Activated CD4-positive, alpha-beta T cell treated with anti-CD3 and anti-CD28 coated beads for 36 hours (primary cell): ENCODE measurements at regions of chr19 and their contacts with region 1.

Region 1: GRCh38 chr19:42075616-42076379 is at the start of gene ZNF574:
- DNase-seq: peak; percentile 99
- ATAC-seq: peak; percentile 99
- H3K4me3 Mint-ChIP-seq: peak within 1 kb of the TSS; percentile 89
- H3K27ac Mint-ChIP-seq: peak within 1 kb of the TSS; percentile 99
- H3K4me1 Mint-ChIP-seq: peaks cover 27% of the 10 kb centered on the region
- H3K27me3 Mint-ChIP-seq: no peaks in the 10 kb centered on the region
- total RNA-seq, gene ZNF574: 10.7 to 14.8 TPM

Region 2: DNA sequence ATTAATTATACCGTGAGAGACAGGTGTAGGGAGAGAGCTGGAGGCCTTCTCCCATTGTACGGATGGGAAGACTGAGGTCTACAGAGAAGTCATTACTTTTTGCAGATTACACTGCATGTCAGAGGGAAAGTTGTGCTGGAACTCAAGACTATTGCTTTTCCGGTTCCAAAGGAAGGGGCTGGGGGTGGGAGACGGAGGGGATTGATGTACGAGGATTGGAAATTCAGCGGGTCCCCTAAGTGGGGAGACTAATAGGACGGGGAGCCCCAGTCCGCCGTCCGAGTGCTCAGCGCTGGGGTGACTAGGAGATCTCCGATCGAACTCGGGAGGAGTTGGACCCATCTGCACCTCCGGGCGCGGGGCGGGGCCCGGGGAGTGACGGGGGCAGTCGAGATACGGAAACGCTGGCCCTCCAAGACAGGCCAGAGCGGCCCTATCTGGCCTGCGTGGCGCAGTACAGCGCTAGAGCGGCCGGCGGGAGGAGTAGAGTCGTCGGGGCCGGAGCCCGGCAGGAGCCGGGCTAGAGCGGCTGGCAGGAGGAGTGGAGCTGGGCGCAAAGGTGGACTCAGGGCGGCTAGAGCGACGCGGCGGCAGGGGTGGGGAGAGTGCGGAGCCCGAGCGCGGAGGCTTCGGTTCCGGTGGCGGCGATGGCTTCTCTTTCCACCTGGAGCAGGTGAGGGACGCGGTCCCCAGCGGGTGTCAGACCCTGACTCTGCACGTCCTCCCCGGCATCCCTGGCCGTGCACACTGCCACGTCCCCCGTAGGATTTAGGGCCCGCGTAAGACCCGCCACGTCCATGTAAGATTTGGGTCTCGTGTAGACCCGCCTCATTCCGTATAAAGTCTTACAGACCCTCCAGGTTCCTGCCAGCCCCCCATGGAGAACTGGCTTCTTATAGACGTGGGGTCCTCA is 191.7 kb before region 1 on chr19:
- CTCF ChIA-PET with region 1: no interaction called
- POLR2A ChIA-PET with region 1: no interaction called
- intact Hi-C with region 1: loop called in 1 of 2 experiments (anchors 5 kb)
- DNase-seq: peak; percentile 94
- ATAC-seq: peak; percentile 75
- H3K4me3 Mint-ChIP-seq: peak overlapping the region; percentile 68
- H3K27ac Mint-ChIP-seq: peak overlapping the region; percentile 96
- H3K4me1 Mint-ChIP-seq: peaks cover 54% of the 10 kb centered on the region
- H3K27me3 Mint-ChIP-seq: no peaks in the 10 kb centered on the region

Region 3: GRCh38 chr19:42048992-42049391 is 26.8 kb before region 1 on chr19:
- CTCF ChIA-PET with region 1: no interaction called
- POLR2A ChIA-PET with region 1: no interaction called
- intact Hi-C with region 1: loop called in 1 of 2 experiments (anchors 1 kb)
- DNase-seq: peak; percentile 34
- ATAC-seq: peak; percentile 9
- H3K4me3 Mint-ChIP-seq: no peak overlapping the region
- H3K27ac Mint-ChIP-seq: peak overlapping the region; percentile 35
- H3K4me1 Mint-ChIP-seq: peaks cover 21% of the 10 kb centered on the region
- H3K27me3 Mint-ChIP-seq: peaks cover 2% of the 10 kb centered on the region

Region 4: GRCh38 chr19:42244347-42245220 is 168.8 kb after region 1 on chr19:
- CTCF ChIA-PET with region 1: interaction called, 4 read pairs
- POLR2A ChIA-PET with region 1: no interaction called
- intact Hi-C with region 1: loop called in 1 of 2 experiments (anchors 1 kb)
- DNase-seq: peak; percentile 96
- ATAC-seq: peak; percentile 49
- H3K4me3 Mint-ChIP-seq: peak overlapping the region; percentile 93
- H3K27ac Mint-ChIP-seq: peak overlapping the region; percentile 94
- H3K4me1 Mint-ChIP-seq: peaks cover 42% of the 10 kb centered on the region
- H3K27me3 Mint-ChIP-seq: no peaks in the 10 kb centered on the region

Region 5: DNA sequence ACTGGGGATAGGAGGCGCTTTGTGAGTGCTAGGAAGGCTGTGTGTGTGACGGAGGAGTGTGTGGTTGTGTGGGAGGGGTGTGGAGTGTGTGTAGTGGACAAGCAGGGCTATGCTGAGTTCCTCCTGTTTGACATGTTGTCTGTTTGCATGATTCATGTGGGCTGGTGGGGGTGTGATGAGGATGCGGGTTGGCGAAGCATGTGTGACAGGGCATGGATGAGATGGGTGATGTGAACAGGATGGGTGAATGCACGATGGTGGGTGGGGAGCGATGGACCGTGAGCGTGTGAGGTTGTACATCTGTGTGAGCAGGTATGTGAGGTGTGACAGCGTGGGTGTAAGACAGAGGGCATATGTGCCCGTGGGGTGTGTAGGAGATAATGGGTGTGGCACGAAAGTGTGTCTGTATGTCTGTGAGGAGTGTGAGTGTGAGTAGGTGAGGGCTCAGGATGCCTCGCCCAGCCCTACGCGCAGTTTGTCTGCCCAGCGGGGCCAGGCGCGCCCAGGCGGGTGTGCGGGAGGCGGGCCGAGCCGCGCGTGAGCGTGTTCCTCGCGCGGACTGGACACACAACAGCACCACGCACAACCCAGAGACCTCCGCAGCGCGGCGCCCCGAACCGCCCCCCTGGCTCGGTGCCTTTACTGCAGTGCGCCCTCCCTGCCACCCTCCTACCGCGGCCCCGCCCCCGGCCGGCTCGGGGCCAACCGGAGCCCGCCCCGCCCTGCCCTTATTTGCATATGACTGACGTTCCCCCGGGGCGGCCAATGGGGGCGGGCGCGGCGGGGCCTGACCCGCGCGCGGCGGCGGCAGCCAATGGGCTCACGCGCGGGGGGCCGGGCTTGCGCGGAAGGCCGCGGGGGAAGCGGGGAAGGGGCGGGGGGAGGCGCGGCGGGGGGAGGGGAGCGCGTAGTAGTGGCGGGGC is 207.6 kb after region 1 on chr19:
- CTCF ChIA-PET with region 1: interaction called, 3 read pairs
- POLR2A ChIA-PET with region 1: no interaction called
- intact Hi-C with region 1: loop called (anchors 1 to 5 kb)
- DNase-seq: peak; percentile 98
- ATAC-seq: peak; percentile 62
- H3K4me3 Mint-ChIP-seq: no peak overlapping the region
- H3K27ac Mint-ChIP-seq: no peak overlapping the region
- H3K4me1 Mint-ChIP-seq: peaks cover 41% of the 10 kb centered on the region
- H3K27me3 Mint-ChIP-seq: no peaks in the 10 kb centered on the region

Region 6: GRCh38 chr19:42325273-42325895 is 249.6 kb after region 1 on chr19 and contains the start of gene MEGF8:
- CTCF ChIA-PET with region 1: no interaction called
- POLR2A ChIA-PET with region 1: no interaction called
- intact Hi-C with region 1: loop called in 1 of 2 experiments (anchors 1 kb)
- DNase-seq: peak; percentile 99
- ATAC-seq: peak; percentile 98
- H3K4me3 Mint-ChIP-seq: peak within 1 kb of the TSS; percentile 80
- H3K27ac Mint-ChIP-seq: peak within 1 kb of the TSS; percentile 69
- H3K4me1 Mint-ChIP-seq: peaks cover 12% of the 10 kb centered on the region
- H3K27me3 Mint-ChIP-seq: peaks cover 12% of the 10 kb centered on the region
- total RNA-seq, gene MEGF8: 5.2 to 5.3 TPM

Region 7: GRCh38 chr19:42363614-42364346 is 288.0 kb after region 1 on chr19:
- CTCF ChIA-PET with region 1: no interaction called
- POLR2A ChIA-PET with region 1: no interaction called
- intact Hi-C with region 1: no loop called
- DNase-seq: no peak
- ATAC-seq: no peak
- H3K4me3 Mint-ChIP-seq: no peak overlapping the region
- H3K27ac Mint-ChIP-seq: no peak overlapping the region
- H3K4me1 Mint-ChIP-seq: no peaks in the 10 kb centered on the region
- H3K27me3 Mint-ChIP-seq: no peaks in the 10 kb centered on the region

Region 8: GRCh38 chr19:42423462-42424344 is 347.9 kb after region 1 on chr19:
- CTCF ChIA-PET with region 1: no interaction called
- POLR2A ChIA-PET with region 1: no interaction called
- intact Hi-C with region 1: loop called in 1 of 2 experiments (anchors 1 kb)
- DNase-seq: peak; percentile 96
- ATAC-seq: peak; percentile 91
- H3K4me3 Mint-ChIP-seq: peak overlapping the region; percentile 86
- H3K27ac Mint-ChIP-seq: peak overlapping the region; percentile 92
- H3K4me1 Mint-ChIP-seq: peaks cover 40% of the 10 kb centered on the region
- H3K27me3 Mint-ChIP-seq: no peaks in the 10 kb centered on the region